ENCODE measurements at regions of chr12 and their contacts with region 1.

Region 1: GRCh38 chr12:19971396-19971802 is 396.9 kb upstream of the PDE3A start:
- DNase-seq: peak; percentile 82 to 90
- H3K4me3 ChIP-seq: no peak overlapping the region
- H3K4me3 Mint-ChIP-seq: no peak overlapping the region
- H3K27ac Mint-ChIP-seq: peak overlapping the region; percentile 79
- H3K4me1 ChIP-seq: peaks cover 13% of the 10 kb centered on the region
- H3K4me1 Mint-ChIP-seq: peaks cover 25% of the 10 kb centered on the region
- H3K27me3 ChIP-seq: no peaks in the 10 kb centered on the region
- H3K27me3 Mint-ChIP-seq: no peaks in the 10 kb centered on the region
- CTCF ChIP-seq: peak in 1 of 2 experiments; percentile 19

Region 2: DNA sequence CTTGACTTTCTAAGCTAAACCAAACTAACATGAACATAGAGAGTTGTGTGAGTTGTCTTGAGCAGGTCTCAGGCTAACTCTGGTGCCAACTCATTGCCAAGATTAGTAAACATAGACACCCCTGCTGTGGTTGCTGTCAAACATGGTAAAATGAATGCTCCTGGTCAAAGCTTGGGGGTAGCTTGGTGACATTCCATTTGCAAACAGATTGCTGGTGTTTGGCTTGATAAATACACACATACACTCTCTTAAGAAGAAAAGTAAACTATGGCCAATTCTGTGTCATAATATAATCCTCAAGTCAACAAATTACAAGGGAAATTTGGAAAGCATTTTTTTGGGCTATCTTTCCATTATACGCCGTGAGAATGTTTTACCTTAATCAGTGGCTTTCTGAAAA is 10.5 kb after region 1 on chr12:
- CTCF ChIA-PET with region 1: interaction called, 5 read pairs
- POLR2A ChIA-PET with region 1: no interaction called
- intact Hi-C with region 1: loop called (anchors 1 kb)
- DNase-seq: peak in 1 of 2 experiments; percentile 30
- H3K4me3 ChIP-seq: no peak overlapping the region
- H3K4me3 Mint-ChIP-seq: no peak overlapping the region
- H3K27ac Mint-ChIP-seq: no peak overlapping the region
- H3K4me1 ChIP-seq: peaks cover 10% of the 10 kb centered on the region; the same call in 1 of the 2 replicates
- H3K4me1 Mint-ChIP-seq: peaks cover 14% of the 10 kb centered on the region
- H3K27me3 ChIP-seq: no peaks in the 10 kb centered on the region
- H3K27me3 Mint-ChIP-seq: no peaks in the 10 kb centered on the region
- CTCF ChIP-seq: no peak

Region 3: GRCh38 chr12:20018406-20018805 is 47.0 kb after region 1 on chr12:
- CTCF ChIA-PET with region 1: no interaction called
- POLR2A ChIA-PET with region 1: no interaction called
- intact Hi-C with region 1: loop called (anchors 1 kb)
- DNase-seq: peak in 1 of 2 experiments; percentile 41
- H3K4me3 ChIP-seq: no peak overlapping the region
- H3K4me3 Mint-ChIP-seq: no peak overlapping the region
- H3K27ac Mint-ChIP-seq: peak overlapping the region; percentile 62
- H3K4me1 ChIP-seq: peaks cover 14% of the 10 kb centered on the region
- H3K4me1 Mint-ChIP-seq: peaks cover 13% of the 10 kb centered on the region
- H3K27me3 ChIP-seq: no peaks in the 10 kb centered on the region
- H3K27me3 Mint-ChIP-seq: no peaks in the 10 kb centered on the region
- CTCF ChIP-seq: no peak

Region 4: DNA sequence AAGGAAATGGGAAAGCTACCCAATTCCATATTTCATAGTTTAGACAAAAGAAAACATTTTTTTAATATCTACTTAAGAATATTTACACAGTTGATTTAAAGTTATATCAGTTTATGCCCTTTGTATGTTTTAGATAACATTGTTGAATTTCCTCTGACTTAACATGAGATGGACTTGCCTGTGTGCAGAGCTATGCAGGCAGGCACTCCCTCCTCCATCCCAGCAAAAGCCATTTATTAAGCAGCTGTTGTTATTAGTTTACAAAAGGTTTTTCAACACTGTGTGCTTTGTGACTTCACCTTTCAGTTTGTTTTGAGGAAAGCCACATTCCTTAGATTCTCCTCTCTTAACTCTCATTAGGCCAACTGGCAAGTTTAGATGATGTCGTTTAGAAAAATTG is 59.4 kb after region 1 on chr12:
- CTCF ChIA-PET with region 1: no interaction called
- POLR2A ChIA-PET with region 1: no interaction called
- intact Hi-C with region 1: loop called (anchors 5 kb)
- DNase-seq: peak; percentile 61 to 73
- H3K4me3 ChIP-seq: no peak overlapping the region
- H3K4me3 Mint-ChIP-seq: no peak overlapping the region
- H3K27ac Mint-ChIP-seq: peak overlapping the region; percentile 51
- H3K4me1 ChIP-seq: peaks cover 20% of the 10 kb centered on the region
- H3K4me1 Mint-ChIP-seq: peaks cover 7% of the 10 kb centered on the region
- H3K27me3 ChIP-seq: no peaks in the 10 kb centered on the region
- H3K27me3 Mint-ChIP-seq: no peaks in the 10 kb centered on the region
- CTCF ChIP-seq: no peak

Region 5: GRCh38 chr12:20077618-20078017 is 106.2 kb after region 1 on chr12:
- CTCF ChIA-PET with region 1: no interaction called
- POLR2A ChIA-PET with region 1: no interaction called
- intact Hi-C with region 1: loop called (anchors 5 kb)
- DNase-seq: no peak
- H3K4me3 ChIP-seq: no peak overlapping the region
- H3K4me3 Mint-ChIP-seq: no peak overlapping the region
- H3K27ac Mint-ChIP-seq: no peak overlapping the region
- H3K4me1 ChIP-seq: no peaks in the 10 kb centered on the region
- H3K4me1 Mint-ChIP-seq: no peaks in the 10 kb centered on the region
- H3K27me3 ChIP-seq: no peaks in the 10 kb centered on the region
- H3K27me3 Mint-ChIP-seq: peaks cover 2% of the 10 kb centered on the region
- CTCF ChIP-seq: no peak

Region 6: GRCh38 chr12:20194171-20194570 is 222.8 kb after region 1 on chr12:
- CTCF ChIA-PET with region 1: no interaction called
- POLR2A ChIA-PET with region 1: no interaction called
- intact Hi-C with region 1: loop called (anchors 5 kb)
- DNase-seq: peak; percentile 49 to 62
- H3K4me3 ChIP-seq: no peak overlapping the region
- H3K4me3 Mint-ChIP-seq: no peak overlapping the region
- H3K27ac Mint-ChIP-seq: no peak overlapping the region
- H3K4me1 ChIP-seq: peaks cover 11% of the 10 kb centered on the region
- H3K4me1 Mint-ChIP-seq: peaks cover 20% of the 10 kb centered on the region
- H3K27me3 ChIP-seq: no peaks in the 10 kb centered on the region
- H3K27me3 Mint-ChIP-seq: no peaks in the 10 kb centered on the region
- CTCF ChIP-seq: peak; percentile 44 to 69